ENCODE measurements at regions of chr2 and their contacts with region 1.

Region 1: GRCh38 chr2:215920244-215921100 is 92.9 kb downstream of the MREG start:
- DNase-seq: no peak
- ATAC-seq: peak; percentile 75
- H3K4me3 ChIP-seq: no peak overlapping the region
- H3K27ac ChIP-seq: no peak overlapping the region
- H3K4me1 ChIP-seq: peaks cover 25% of the 10 kb centered on the region
- H3K27me3 ChIP-seq: no peaks in the 10 kb centered on the region
- CTCF ChIP-seq: peak; percentile 89 to 93 (median 91); a peak in 5 of 6 replicates
- EP300 ChIP-seq: no peak
- POLR2A ChIP-seq: no peak
- RAD21 ChIP-seq: peak; percentile 95

Region 2: GRCh38 chr2:214809751-214810564 is 1110.5 kb before region 1 on chr2:
- CTCF ChIA-PET with region 1: no interaction called
- POLR2A ChIA-PET with region 1: no interaction called
- RAD21 ChIA-PET with region 1: no interaction called
- SMC1A ChIA-PET with region 1: no interaction called
- in situ Hi-C with region 1: no loop called
- intact Hi-C with region 1: loop called (anchors 5 kb)
- DNase-seq: peak; percentile 87
- ATAC-seq: peak; percentile 88
- H3K4me3 ChIP-seq: peak overlapping the region; percentile 81
- H3K27ac ChIP-seq: peak overlapping the region; percentile 72
- H3K4me1 ChIP-seq: 0 out of 2 replicates have a peak, but pooled peaks cover 5% of the 10 kb centered on the region
- H3K27me3 ChIP-seq: no peaks in the 10 kb centered on the region
- CTCF ChIP-seq: no peak
- EP300 ChIP-seq: no peak
- POLR2A ChIP-seq: peak; percentile 76
- RAD21 ChIP-seq: no peak

Region 3: GRCh38 chr2:215435809-215436704 is 484.4 kb before region 1 on chr2 and contains the start of gene FN1:
- CTCF ChIA-PET with region 1: interaction called, 5 read pairs
- POLR2A ChIA-PET with region 1: no interaction called
- RAD21 ChIA-PET with region 1: interaction called, 7 read pairs
- SMC1A ChIA-PET with region 1: interaction called, 14 read pairs
- in situ Hi-C with region 1: no loop called
- intact Hi-C with region 1: loop called (anchors 5 kb)
- DNase-seq: no peak
- ATAC-seq: peak; percentile 85
- H3K4me3 ChIP-seq: peak within 1 kb of the TSS; percentile 68
- H3K27ac ChIP-seq: no peak within 1 kb of the TSS
- H3K4me1 ChIP-seq: no peaks in the 10 kb centered on the region
- H3K27me3 ChIP-seq: peaks cover 0 to 14% of the 10 kb centered on the region in 2 experiments; a peak in 2 of 4 replicates
- CTCF ChIP-seq: no peak
- EP300 ChIP-seq: no peak
- POLR2A ChIP-seq: no peak
- RAD21 ChIP-seq: no peak
- polyA plus RNA-seq, gene FN1: 1.1 to 1.6 TPM

Region 4: GRCh38 chr2:215680605-215681598 is 239.6 kb before region 1 on chr2:
- CTCF ChIA-PET with region 1: no interaction called
- POLR2A ChIA-PET with region 1: no interaction called
- RAD21 ChIA-PET with region 1: interaction called, 20 read pairs
- SMC1A ChIA-PET with region 1: interaction called, 23 read pairs
- in situ Hi-C with region 1: no loop called
- intact Hi-C with region 1: loop called (anchors 1 kb)
- DNase-seq: peak; percentile 50
- ATAC-seq: peak; percentile 94
- H3K4me3 ChIP-seq: 0 out of 2 replicates have a peak overlapping the region, but pooled peaks have one; percentile 5
- H3K27ac ChIP-seq: no peak overlapping the region
- H3K4me1 ChIP-seq: no peaks in the 10 kb centered on the region
- H3K27me3 ChIP-seq: no peaks in the 10 kb centered on the region
- CTCF ChIP-seq: no peak
- EP300 ChIP-seq: peak; percentile 44 to 45; a peak in 2 of 4 replicates
- POLR2A ChIP-seq: no peak
- RAD21 ChIP-seq: no peak

Region 5: GRCh38 chr2:215811409-215812345 is 108.8 kb before region 1 on chr2:
- CTCF ChIA-PET with region 1: interaction called, 4 read pairs
- POLR2A ChIA-PET with region 1: no interaction called
- RAD21 ChIA-PET with region 1: interaction called, 39 read pairs
- SMC1A ChIA-PET with region 1: interaction called, 17 read pairs
- in situ Hi-C with region 1: no loop called
- intact Hi-C with region 1: loop called (anchors 5 kb)
- DNase-seq: peak; percentile 90
- ATAC-seq: peak; percentile 98
- H3K4me3 ChIP-seq: peak overlapping the region; percentile 30; the same call in 1 of the 2 replicates
- H3K27ac ChIP-seq: peak overlapping the region; percentile 45
- H3K4me1 ChIP-seq: peaks cover 19% of the 10 kb centered on the region
- H3K27me3 ChIP-seq: no peaks in the 10 kb centered on the region
- CTCF ChIP-seq: no peak
- EP300 ChIP-seq: peak in 1 of 2 experiments; percentile 87; a peak in 2 of 4 replicates
- POLR2A ChIP-seq: no peak
- RAD21 ChIP-seq: no peak

Region 6: DNA sequence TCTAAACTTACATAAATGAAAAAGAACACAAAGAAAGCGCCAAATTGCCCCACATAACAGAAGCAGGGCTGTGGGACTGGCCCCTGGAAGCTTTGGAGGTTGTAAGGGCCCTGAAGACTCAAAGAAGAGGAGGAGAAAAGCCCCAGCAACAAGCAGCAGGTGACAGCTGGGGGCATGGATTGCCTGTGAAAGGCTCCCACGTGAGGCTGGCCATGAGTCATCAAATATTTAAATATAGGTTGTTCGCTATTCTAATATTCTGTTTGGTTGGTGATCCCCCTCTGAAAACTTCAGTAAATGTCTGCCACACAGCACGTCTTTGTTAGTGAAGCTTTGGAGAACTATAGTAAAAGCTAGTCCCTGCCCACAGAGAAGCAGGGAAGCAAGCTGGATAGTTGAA is 39.5 kb before region 1 on chr2:
- CTCF ChIA-PET with region 1: interaction called, 6 read pairs
- POLR2A ChIA-PET with region 1: interaction called, 3 read pairs
- RAD21 ChIA-PET with region 1: interaction called, 76 read pairs
- SMC1A ChIA-PET with region 1: interaction called, 185 read pairs
- in situ Hi-C with region 1: no loop called
- intact Hi-C with region 1: loop called (anchors 5 kb)
- DNase-seq: peak; percentile 38
- ATAC-seq: peak; percentile 82
- H3K4me3 ChIP-seq: no peak overlapping the region
- H3K27ac ChIP-seq: no peak overlapping the region
- H3K4me1 ChIP-seq: peaks cover 15% of the 10 kb centered on the region
- H3K27me3 ChIP-seq: no peaks in the 10 kb centered on the region
- CTCF ChIP-seq: no peak
- EP300 ChIP-seq: no peak
- POLR2A ChIP-seq: no peak
- RAD21 ChIP-seq: no peak

Region 7: DNA sequence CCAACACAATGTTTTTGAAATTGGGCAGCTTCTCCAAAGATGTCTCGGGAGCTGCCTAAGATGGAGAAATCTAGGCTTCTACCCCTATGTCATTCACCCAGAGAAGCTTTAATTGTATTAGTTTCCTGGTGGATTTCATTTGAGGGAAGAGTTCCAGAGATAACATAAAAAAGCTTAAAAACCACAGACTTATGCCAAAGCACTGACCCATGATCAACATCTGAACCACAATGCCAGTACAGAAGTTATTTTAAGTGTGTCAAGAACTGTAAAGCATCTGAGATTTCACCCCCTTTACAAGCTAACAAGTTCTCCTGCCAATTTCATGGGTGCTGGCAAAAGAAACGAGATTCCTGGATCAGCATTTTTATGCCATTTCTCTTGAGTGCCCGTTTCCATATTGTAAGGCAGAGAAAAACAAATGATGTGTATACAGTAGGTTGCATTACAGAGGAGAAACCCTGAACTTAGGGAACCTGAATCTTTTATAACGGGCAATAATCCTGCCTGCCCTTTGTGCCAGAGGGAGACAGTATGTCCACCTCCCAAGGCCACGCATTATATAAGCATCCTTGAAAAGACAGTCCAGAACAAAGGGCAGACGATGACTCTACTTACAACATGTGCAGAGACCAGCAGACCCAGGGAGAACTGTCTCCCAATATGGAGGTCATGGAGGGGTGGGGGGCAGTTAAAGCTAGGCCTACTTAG is 48.8 kb after region 1 on chr2:
- CTCF ChIA-PET with region 1: no interaction called
- POLR2A ChIA-PET with region 1: no interaction called
- RAD21 ChIA-PET with region 1: no interaction called
- SMC1A ChIA-PET with region 1: no interaction called
- in situ Hi-C with region 1: no loop called
- intact Hi-C with region 1: no loop called
- DNase-seq: no peak
- ATAC-seq: peak; percentile 27; the same call in 1 of the 3 replicates
- H3K4me3 ChIP-seq: no peak overlapping the region
- H3K27ac ChIP-seq: peak overlapping the region; percentile 20; the same call in 1 of the 2 replicates
- H3K4me1 ChIP-seq: peaks cover 5% of the 10 kb centered on the region; the same call in 1 of the 2 replicates
- H3K27me3 ChIP-seq: no peaks in the 10 kb centered on the region
- CTCF ChIP-seq: no peak
- EP300 ChIP-seq: no peak
- POLR2A ChIP-seq: no peak
- RAD21 ChIP-seq: no peak